Pancreas (tissue), 10 donors: ENCODE measurements at regions of chr1 and their contacts with region 1.

Region 1: GRCh38 chr1:42886800-42887199 is 40.4 kb downstream of the ZNF691 start:
- DNase-seq: peak in 1 of 6 donors; percentile 59
- ATAC-seq: no peak
- H3K4me3 ChIP-seq: no peak overlapping the region
- H3K27ac ChIP-seq: no peak overlapping the region
- H3K4me1 ChIP-seq: no peaks in the 10 kb centered on the region
- H3K27me3 ChIP-seq: no peaks in the 10 kb centered on the region
- CTCF ChIP-seq: no peak

Region 2: GRCh38 chr1:42784946-42785693 is 101.7 kb before region 1 on chr1 and contains the start of gene TMEM269:
- intact Hi-C with region 1: loop called in 1 of 3 experiments (anchors 10 kb)
- DNase-seq: peak in 2 of 6 donors; percentile 63 to 65
- ATAC-seq: peak; percentile 24 to 62 (median 54)
- H3K4me3 ChIP-seq: peak within 1 kb of the TSS in 2 of 4 donors; percentile 13 to 42
- H3K27ac ChIP-seq: no peak within 1 kb of the TSS
- H3K4me1 ChIP-seq: no peaks in the 10 kb centered on the region
- H3K27me3 ChIP-seq: no peaks in the 10 kb centered on the region
- CTCF ChIP-seq: no peak
- total RNA-seq, gene TMEM269: 0.18 to 0.35 (median 0.23) TPM in 3 of 6 donors, not detected in the others

Region 3: GRCh38 chr1:42958488-42959319 is 71.9 kb after region 1 on chr1 and contains the start of gene SLC2A1:
- intact Hi-C with region 1: no loop called
- DNase-seq: peak; percentile 85 to 97 (median 90)
- ATAC-seq: peak; percentile 90 to 93 (median 93)
- H3K4me3 ChIP-seq: peak within 1 kb of the TSS; percentile 62 to 91 (median 80)
- H3K27ac ChIP-seq: peak within 1 kb of the TSS; percentile 35 to 90 (median 76)
- H3K4me1 ChIP-seq: no peaks in the 10 kb centered on the region
- H3K27me3 ChIP-seq: no peaks in the 10 kb centered on the region
- CTCF ChIP-seq: no peak
- total RNA-seq, gene SLC2A1: 1.6 to 10.9 (median 6.8) TPM